ENCODE measurements at regions of chr1 and their contacts with region 1.

Region 1: DNA sequence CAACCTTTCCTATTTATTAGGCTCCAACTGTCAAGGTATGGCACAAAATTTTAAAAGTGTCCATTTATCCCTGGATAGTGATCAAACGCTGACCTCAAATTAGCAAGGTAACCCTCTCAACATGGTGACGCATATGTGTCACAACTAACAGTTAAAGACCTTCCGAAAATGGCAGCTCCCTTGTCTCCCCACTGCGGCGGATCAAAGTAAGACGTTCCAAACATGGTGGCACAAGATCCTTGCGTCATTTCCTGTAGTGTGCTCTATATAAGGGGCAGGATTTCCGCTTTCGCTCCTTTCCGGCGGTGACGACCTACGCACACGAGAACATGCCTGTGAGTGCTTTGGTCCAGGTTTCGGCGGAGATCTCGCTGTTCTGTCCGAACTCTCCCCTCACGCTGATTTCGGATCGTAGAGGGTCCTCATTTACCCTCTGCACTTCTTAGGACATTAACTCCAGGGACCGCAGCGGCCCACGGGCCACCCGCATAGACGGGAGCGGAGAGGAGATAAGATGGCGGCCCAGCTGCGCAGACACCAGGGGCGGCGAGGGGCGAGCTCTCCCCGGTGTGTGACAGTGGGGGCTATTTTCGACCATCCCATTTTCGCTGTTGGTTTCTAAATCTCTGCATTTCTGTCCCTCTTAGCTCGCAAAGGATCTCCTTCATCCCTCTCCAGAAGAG is at the start of gene RPS27:
- H3K4me3 Mint-ChIP-seq: peak within 1 kb of the TSS; percentile 91
- H3K27ac Mint-ChIP-seq: peak within 1 kb of the TSS; percentile 98
- H3K4me1 Mint-ChIP-seq: peaks cover 52% of the 10 kb centered on the region
- H3K27me3 Mint-ChIP-seq: no peaks in the 10 kb centered on the region

Region 2: DNA sequence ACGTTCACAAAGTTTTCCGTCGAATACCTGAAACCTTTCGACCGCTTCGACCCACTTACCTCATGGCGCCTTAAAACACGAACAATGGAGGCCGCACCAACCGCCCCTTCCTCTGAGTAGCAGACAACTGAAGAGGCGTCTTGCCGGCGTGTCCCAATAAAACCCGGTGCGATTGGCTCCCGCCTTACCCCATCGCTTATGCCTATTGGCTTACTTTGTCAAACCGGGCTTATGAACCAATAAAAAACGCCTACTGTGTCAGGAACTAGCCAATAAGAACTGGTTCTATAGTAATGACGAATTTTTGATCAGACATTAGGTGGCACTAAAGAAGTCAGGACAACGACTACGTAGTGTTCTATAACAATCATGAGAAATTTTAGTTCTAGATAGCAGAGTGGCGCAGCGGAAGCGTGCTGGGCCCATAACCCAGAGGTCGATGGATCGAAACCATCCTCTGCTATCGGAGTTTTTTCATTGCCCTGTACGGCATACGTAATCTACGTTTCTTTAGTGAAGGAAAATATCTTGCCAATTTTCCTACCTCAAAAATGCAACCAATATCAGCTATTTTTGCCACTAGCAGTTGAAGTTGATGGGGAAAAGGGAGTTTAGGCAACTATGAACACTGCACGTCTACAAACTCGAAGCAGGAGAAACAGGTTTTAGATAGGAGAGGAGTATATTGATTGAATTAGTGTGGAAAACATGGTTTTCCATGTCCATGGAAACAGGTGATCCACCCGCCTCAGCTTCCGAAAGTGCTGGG is 319.6 kb before region 1 on chr1 and contains the start of gene ILF2:
- intact Hi-C with region 1: loop called (anchors 2 kb)
- H3K4me3 Mint-ChIP-seq: no peak within 1 kb of the TSS
- H3K27ac Mint-ChIP-seq: no peak within 1 kb of the TSS
- H3K4me1 Mint-ChIP-seq: peaks cover 5% of the 10 kb centered on the region
- H3K27me3 Mint-ChIP-seq: no peaks in the 10 kb centered on the region

Region 3: DNA sequence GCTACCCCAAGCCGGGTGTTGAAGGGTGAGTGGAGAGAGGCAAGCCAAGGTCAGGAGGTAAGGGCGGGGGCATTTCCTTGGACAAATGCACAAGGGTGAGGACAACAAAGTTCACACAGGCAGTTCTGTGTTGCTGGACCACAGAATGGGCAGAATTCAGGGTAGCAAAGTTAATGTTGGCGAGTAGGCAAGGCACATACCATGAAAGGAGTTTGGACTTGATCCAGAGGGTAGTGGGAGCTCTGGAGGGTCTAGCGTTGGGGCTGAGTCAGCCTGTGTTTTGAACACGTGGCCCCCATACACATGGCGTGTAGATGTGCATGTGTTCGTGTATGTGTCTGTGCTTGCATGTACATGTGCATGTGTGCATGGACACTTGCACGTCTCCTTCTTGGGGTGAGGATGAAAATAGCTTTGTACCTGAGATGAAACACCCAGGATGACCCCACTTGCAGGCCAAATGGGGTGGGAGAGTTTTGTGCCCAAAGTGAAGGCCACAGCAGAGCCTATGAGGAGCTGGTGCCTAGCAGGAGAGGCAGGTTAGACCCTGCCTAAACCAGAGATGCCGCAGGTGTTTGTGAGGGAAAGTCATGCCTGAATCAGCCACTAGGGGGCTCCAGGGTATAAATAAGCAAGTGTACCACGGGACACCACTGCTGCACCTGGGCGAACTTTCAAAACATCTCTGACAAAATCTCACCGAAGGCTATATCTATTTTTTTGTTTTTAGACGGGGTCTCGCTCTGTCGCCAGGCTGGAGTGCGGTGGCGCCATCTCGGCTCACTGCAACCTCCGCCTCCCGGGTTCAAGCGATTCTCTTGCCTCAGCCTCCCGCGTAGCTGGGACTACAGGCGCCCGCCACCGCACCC is 193.6 kb before region 1 on chr1:
- intact Hi-C with region 1: loop called (anchors 2 kb)
- H3K4me3 Mint-ChIP-seq: no peak overlapping the region
- H3K27ac Mint-ChIP-seq: peak overlapping the region; percentile 25
- H3K4me1 Mint-ChIP-seq: peaks cover 56% of the 10 kb centered on the region
- H3K27me3 Mint-ChIP-seq: peaks cover under 1% of the 10 kb centered on the region

Region 4: GRCh38 chr1:153816283-153816889 is 174.2 kb before region 1 on chr1:
- intact Hi-C with region 1: loop called (anchors 1 kb)
- H3K4me3 Mint-ChIP-seq: no peak overlapping the region
- H3K27ac Mint-ChIP-seq: no peak overlapping the region
- H3K4me1 Mint-ChIP-seq: no peaks in the 10 kb centered on the region
- H3K27me3 Mint-ChIP-seq: no peaks in the 10 kb centered on the region

Region 5: DNA sequence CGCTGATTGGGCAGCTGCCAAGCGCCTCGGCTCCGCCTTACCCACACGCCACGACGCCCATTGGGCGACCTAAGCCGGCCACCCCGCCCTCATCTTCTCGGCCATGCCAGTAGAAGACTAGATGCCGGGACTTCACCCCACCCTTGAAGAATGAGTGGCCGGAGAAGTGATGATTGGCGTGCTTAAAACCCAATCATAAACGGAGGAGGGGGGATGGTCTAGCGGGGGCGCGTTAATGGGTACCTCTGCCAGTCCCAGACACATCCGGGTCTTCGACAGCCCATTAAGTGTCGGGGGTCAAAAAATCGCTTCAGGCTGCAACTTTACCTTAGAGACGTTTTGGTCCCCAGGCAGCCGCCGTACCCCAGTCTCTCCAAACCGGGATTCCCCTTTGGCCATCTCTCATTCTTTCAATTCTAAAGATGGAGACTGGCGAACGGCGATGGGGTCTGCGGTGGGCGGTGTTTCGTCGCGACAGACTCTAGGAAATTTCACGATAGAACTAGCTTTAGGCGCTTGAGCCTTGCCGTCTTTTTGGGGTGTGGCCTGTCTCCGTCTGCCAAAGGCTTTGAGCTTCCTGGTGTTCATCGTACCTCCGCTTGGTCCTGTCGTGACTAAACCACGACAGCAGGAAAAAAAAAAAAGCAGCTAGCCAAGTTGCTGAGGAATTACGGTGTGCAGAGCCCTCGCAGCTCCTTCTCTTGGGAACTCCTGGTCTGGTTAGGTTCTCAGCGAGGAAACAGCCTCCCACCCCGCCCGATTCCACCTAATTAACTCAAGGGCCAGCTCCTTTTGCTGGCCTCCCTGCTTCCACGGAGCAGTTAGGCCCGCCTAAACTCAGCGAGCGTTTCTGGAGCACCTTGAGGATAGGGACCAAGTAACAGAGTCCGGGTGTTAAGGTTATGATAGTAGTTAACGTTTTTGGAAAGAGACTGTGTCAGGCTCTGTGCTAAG is 67.4 kb before region 1 on chr1 and contains the start of gene GATAD2B:
- intact Hi-C with region 1: loop called (anchors 5 kb)
- H3K4me3 Mint-ChIP-seq: peak within 1 kb of the TSS; percentile 95
- H3K27ac Mint-ChIP-seq: peak within 1 kb of the TSS; percentile 92
- H3K4me1 Mint-ChIP-seq: peaks cover 41% of the 10 kb centered on the region
- H3K27me3 Mint-ChIP-seq: no peaks in the 10 kb centered on the region

Region 6: DNA sequence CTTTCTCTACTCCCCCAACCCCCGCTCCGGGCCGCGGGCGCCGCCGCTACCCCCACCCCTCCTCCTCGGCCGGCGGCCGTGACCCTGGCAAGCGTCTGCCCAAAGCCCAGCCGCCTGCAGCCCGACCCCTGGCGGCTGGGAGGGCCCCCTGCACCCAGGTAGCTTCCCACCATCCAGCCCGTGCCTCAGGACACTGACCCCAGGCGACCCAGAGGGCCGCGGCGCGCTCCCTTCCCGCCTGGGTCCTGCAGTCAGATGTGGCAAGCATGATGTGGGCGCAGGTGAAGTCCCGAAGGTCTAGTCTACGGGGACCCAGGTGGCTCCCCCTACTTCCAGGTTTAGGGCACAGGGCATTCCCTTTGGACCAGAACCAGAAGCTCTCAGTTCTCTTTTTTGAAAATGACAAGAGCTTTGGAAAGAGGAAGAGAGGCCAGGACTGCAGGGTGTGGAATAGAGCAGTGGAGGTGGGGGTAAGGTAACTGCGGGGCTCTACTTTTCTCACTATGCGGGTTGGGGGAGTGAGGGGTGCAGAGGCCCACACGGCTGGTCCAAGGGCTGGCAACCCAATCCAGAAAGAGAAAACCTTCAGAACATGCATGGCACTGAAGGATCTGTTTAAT is 43.9 kb before region 1 on chr1 and contains the start of gene DENND4B:
- intact Hi-C with region 1: loop called (anchors 2 kb)
- H3K4me3 Mint-ChIP-seq: peak within 1 kb of the TSS; percentile 90
- H3K27ac Mint-ChIP-seq: peak within 1 kb of the TSS; percentile 99
- H3K4me1 Mint-ChIP-seq: peaks cover 83% of the 10 kb centered on the region
- H3K27me3 Mint-ChIP-seq: no peaks in the 10 kb centered on the region

Region 7: DNA sequence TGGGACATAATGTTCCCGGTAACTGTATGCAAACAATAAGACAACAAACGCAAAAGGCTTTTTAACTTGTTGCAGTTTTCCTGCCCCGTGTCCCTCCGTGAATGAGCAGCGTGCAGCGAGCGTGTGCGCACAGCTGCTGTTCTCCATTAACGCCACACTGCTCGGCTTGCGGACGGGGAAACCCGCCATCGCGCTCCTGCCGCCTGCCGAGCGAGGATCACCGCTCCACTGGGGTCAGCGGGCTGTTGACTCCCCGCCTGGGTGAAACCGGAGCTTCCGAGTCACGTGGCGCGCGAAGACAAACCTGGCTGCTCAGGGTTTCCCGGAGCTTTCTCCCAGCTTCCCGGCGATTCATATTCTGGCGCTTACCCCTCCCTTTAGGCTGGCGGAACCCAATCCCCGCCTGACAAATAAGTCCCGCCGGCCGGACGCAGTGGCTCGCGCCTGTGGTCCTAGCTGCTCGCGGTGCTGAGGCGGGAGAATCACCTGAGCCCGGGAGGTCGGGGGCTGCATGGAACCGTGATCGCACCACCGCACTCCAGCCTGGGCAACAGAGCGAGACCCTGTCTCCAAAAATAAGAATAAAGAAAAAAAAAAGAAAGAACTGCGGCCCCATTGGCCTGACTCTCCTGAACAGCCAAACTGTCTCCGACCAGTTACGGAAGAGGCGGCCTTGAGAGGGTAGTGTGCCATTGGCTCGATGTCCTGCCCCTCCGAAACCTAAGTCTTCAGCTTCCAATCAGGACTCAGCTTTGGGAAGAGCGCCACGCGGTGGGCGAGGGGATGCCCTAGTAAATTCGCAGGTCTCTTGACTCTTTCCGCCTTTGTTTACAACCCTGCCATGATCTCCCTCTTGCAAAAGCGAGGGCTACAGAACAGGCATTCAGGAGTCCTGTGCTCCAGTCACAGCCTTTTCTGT is 23.3 kb before region 1 on chr1 and contains the start of gene CREB3L4:
- intact Hi-C with region 1: no loop called
- H3K4me3 Mint-ChIP-seq: peak within 1 kb of the TSS; percentile 97
- H3K27ac Mint-ChIP-seq: peak within 1 kb of the TSS; percentile 95
- H3K4me1 Mint-ChIP-seq: peaks cover 47% of the 10 kb centered on the region
- H3K27me3 Mint-ChIP-seq: no peaks in the 10 kb centered on the region

Region 8: GRCh38 chr1:154019269-154019668 is 28.7 kb after region 1 on chr1:
- intact Hi-C with region 1: no loop called
- H3K4me3 Mint-ChIP-seq: no peak overlapping the region
- H3K27ac Mint-ChIP-seq: no peak overlapping the region
- H3K4me1 Mint-ChIP-seq: peaks cover 3% of the 10 kb centered on the region
- H3K27me3 Mint-ChIP-seq: no peaks in the 10 kb centered on the region

Region 9: DNA sequence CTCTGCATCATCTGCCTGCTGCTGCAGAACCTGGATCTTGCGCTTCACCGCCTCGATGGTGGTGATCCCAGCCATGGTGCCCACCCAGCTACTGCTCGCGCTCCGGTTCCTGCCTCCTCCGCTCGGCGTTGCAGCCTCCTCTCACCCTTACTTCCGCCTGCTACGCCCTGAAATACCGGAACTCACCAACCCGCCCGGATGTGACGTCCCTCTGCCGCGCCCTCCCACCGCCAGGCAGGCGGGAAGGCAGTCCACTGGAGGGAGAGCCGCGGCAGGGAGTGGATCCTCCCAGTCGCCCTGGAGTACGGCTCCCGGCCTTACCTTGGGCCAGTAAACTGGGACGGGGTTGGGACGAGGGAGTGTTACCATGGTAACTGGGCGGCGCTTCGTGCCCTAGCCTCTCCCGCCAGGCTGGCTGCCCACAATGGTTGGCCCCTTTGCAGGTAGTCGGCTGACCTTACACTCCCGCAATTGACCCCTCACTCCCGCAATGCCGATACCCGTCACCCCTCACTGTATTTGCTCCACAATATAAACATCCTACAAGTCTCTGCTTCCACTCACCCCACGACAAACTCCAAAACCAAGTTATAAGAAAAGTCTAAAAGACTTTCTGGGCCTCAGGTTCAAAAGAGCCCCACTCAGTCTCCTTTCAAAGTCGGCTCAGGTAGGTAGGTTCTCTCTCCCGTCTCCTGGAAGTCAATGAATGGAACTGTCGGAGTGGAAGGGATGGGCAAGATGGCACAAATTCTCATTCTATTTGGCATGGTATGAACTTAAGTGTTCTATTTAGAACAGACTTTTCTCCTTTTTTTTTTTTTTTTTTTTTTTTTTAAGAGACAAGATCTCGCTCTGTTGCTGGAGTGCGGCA is 192.7 kb after region 1 on chr1:
- intact Hi-C with region 1: loop called (anchors 5 kb)
- H3K4me3 Mint-ChIP-seq: peak overlapping the region; percentile 99
- H3K27ac Mint-ChIP-seq: peak overlapping the region; percentile 97
- H3K4me1 Mint-ChIP-seq: peaks cover 45% of the 10 kb centered on the region
- H3K27me3 Mint-ChIP-seq: no peaks in the 10 kb centered on the region

Measured in dendritic cell treated with granulocyte-macrophage colony-stimulating factor and Interleukin-4, amounts not matched to agents 40 ng/mL and 50 ng/mL, for 4 days (primary cell).